ENCODE measurements at regions of chr15 and their contacts with region 1.

Region 1: GRCh38 chr15:31326156-31326732 is 391 bp upstream of the KLF13 start:
- DNase-seq: peak; percentile 100
- H3K4me3 Mint-ChIP-seq: peak overlapping the region; percentile 83
- H3K27ac Mint-ChIP-seq: peak overlapping the region; percentile 88
- H3K4me1 Mint-ChIP-seq: peaks cover 46% of the 10 kb centered on the region
- H3K27me3 Mint-ChIP-seq: no peaks in the 10 kb centered on the region

Region 2: GRCh38 chr15:30991255-30992072 is 334.8 kb before region 1 on chr15 and contains the start of gene MTMR10:
- intact Hi-C with region 1: loop called (anchors 5 kb)
- DNase-seq: peak; percentile 94
- H3K4me3 Mint-ChIP-seq: peak within 1 kb of the TSS; percentile 95
- H3K27ac Mint-ChIP-seq: peak within 1 kb of the TSS; percentile 94
- H3K4me1 Mint-ChIP-seq: peaks cover 22% of the 10 kb centered on the region
- H3K27me3 Mint-ChIP-seq: peaks cover 14% of the 10 kb centered on the region
- total RNA-seq, gene MTMR10: 11.3 and 12.3 TPM in 2 replicates

Region 3: DNA sequence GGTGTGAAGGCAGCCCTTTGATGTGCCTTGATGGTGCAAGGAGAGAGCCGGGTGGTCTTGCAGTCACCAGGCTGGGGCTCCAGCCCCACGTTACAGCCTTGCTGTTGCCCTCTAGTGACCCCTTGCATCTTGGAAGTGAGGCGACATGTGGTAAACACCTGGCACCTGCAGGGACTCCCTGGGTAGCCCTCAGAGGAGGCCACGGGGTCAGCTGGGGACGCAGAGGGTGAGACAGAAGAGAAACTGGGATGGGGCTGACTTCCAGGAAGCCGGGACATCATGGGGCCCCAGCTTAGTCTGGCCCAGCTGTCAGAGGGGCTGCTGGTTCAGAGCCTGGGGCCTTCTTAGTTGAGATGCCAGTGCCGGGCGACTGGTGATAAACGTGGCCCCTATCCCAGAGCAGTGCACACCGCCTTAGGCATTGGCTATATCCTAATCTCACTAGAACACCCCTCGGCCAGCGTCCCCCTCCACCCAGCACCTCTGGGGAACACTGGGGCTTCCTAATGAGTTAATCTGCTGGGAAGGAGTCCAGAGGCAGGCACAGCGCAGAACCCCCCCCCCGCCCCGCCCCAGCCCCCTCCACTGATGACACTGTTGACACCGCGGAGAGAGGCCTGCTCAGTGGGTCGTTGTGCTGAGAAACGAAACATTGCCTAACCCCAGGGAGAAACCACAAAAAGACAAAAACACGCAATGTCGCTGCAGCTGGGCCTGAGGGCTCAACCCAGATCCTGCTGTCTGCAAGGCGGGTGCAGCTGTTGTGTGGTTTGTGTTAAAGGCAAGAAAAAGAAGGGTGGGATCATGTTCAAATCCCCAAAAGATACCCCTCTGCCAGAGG is 60.2 kb before region 1 on chr15:
- intact Hi-C with region 1: loop called (anchors 5 kb)
- DNase-seq: peak; percentile 94
- H3K4me3 Mint-ChIP-seq: peak overlapping the region; percentile 68
- H3K27ac Mint-ChIP-seq: peak overlapping the region; percentile 78
- H3K4me1 Mint-ChIP-seq: peaks cover 87% of the 10 kb centered on the region
- H3K27me3 Mint-ChIP-seq: no peaks in the 10 kb centered on the region

Region 4: GRCh38 chr15:31344823-31345605 is 18.8 kb after region 1 on chr15:
- intact Hi-C with region 1: loop called (anchors 1 kb)
- DNase-seq: peak; percentile 76
- H3K4me3 Mint-ChIP-seq: peak overlapping the region; percentile 95
- H3K27ac Mint-ChIP-seq: peak overlapping the region; percentile 99
- H3K4me1 Mint-ChIP-seq: peaks cover 91% of the 10 kb centered on the region
- H3K27me3 Mint-ChIP-seq: no peaks in the 10 kb centered on the region

Region 5: GRCh38 chr15:31367730-31368344 is 41.6 kb after region 1 on chr15:
- intact Hi-C with region 1: no loop called
- DNase-seq: peak; percentile 84
- H3K4me3 Mint-ChIP-seq: peak overlapping the region; percentile 83
- H3K27ac Mint-ChIP-seq: peak overlapping the region; percentile 98
- H3K4me1 Mint-ChIP-seq: peaks cover 84% of the 10 kb centered on the region
- H3K27me3 Mint-ChIP-seq: no peaks in the 10 kb centered on the region

Region 6: DNA sequence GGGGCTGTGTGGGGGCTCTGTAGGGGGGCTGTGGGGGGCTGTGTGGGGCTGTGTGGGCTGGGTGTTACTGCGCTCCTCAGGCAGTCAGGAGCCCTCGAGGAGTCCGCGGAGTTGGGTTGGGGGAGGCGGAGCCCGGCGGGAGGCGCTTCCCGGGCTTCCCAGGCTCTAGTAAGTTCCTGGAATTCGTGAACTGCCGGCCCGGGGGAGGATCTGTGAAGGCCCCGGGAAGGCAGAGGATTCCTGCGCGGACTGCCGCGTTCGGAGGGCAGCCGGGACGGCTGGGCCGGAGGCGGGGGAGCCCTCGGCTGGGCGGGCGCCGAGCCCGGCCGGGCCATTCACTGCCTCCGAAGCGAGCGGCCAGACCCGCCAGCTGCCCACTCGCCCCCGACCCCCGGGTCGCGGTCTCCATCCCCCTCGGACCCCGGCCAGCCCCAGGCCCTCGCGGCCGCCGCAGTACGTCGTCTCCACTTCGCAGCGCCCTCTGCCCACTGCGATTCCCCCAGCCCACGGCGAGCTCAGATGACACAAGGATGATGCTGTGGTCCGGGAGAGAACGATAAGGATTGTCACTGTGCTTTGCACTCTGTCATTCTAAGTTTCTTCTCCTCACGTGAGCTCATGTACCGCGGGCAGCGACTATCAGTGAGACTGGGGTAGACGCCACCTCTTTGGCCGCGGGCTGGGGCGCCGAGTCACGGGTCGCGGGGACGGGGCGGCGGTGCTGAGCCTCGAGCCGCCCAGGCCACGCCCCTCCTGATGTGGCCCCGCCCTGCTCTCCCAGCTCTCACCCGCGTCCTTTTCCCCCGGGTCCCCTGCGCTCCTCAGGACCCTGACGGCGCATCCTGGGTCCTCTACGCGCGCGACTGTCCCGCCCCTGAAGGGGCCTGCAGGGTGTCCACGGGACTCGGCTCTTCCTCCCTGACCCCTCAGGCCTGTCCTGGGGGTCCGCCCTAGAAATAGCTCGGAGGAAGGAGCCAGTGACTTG is 65.7 kb after region 1 on chr15:
- intact Hi-C with region 1: loop called (anchors 1 kb)
- DNase-seq: peak; percentile 96
- H3K4me3 Mint-ChIP-seq: peak overlapping the region; percentile 87
- H3K27ac Mint-ChIP-seq: peak overlapping the region; percentile 92
- H3K4me1 Mint-ChIP-seq: peaks cover 38% of the 10 kb centered on the region
- H3K27me3 Mint-ChIP-seq: no peaks in the 10 kb centered on the region

Region 7: GRCh38 chr15:31488426-31489204 is 162.4 kb after region 1 on chr15:
- intact Hi-C with region 1: loop called (anchors 1 kb)
- DNase-seq: peak; percentile 82
- H3K4me3 Mint-ChIP-seq: peak overlapping the region; percentile 41
- H3K27ac Mint-ChIP-seq: peak overlapping the region; percentile 84
- H3K4me1 Mint-ChIP-seq: peaks cover 67% of the 10 kb centered on the region
- H3K27me3 Mint-ChIP-seq: no peaks in the 10 kb centered on the region

Measured in activated CD4-positive, alpha-beta T cell treated with anti-CD3 and anti-CD28 coated beads, Interleukin-2, amount 10 ng/mL, durations not matched to agents 24 days and 14 days (primary cell).